Testis (tissue), 5 donors: ENCODE measurements at regions of chr4 and their contacts with region 1.

Region 1: DNA sequence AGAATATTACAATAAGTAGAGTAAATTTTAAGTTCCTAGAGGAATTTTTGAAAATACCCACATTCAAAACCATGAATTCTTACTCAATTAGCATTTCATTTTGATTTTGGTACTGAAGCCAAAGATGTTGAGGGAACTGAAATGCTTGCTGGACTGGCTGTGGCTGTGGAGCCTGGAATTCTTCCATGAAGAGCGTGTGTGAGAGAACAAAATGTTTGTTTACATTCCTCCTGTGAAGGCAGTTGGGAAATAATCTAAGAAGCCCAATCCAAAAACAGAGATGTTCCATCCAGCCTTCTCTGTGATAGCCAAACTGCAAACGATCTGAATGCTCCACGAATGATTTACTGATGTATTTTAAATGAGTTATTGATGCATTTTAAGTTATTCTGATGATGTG is 3.8 kb upstream of the ADH1B start:
- DNase-seq: peak; percentile 73
- H3K4me3 ChIP-seq: no peak overlapping the region
- H3K27ac ChIP-seq: peak overlapping the region; percentile 65 to 86
- H3K4me1 ChIP-seq: peaks cover 16% of the 10 kb centered on the region
- H3K27me3 ChIP-seq: no peaks in the 10 kb centered on the region
- CTCF ChIP-seq: no peak
- POLR2A ChIP-seq: no peak

Region 2: DNA sequence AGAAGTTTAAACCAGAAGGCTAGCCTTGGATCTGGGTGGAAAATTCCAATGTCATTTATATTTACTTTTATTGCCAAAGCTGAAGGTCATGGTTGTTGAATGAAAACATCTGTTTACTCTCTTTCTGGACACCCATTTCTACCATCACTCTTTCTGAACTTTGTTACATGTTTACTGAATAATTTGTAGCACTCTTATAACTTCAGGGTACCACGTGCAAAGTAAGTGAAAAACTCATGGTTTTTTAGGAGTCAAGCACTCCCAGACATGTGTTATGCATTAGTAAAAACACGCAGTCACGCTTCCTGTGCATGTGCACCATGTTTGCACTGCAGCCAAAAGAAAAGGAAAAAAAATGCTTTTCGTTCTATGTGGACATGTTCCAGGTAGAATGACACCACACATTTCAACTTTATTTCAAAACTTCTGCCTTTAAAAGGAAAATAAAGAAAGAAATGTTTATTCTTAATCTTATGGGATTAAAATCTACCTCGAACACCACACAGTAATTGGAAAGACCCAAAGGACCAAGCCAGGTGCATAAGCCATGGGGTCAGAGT is 58.9 kb after region 1 on chr4:
- intact Hi-C with region 1: loop called (anchors 10 kb)
- DNase-seq: peak; percentile 52
- H3K4me3 ChIP-seq: no peak overlapping the region
- H3K27ac ChIP-seq: peak overlapping the region; percentile 69 to 89
- H3K4me1 ChIP-seq: peaks cover 26% of the 10 kb centered on the region
- H3K27me3 ChIP-seq: no peaks in the 10 kb centered on the region
- CTCF ChIP-seq: no peak
- POLR2A ChIP-seq: no peak

Region 3: DNA sequence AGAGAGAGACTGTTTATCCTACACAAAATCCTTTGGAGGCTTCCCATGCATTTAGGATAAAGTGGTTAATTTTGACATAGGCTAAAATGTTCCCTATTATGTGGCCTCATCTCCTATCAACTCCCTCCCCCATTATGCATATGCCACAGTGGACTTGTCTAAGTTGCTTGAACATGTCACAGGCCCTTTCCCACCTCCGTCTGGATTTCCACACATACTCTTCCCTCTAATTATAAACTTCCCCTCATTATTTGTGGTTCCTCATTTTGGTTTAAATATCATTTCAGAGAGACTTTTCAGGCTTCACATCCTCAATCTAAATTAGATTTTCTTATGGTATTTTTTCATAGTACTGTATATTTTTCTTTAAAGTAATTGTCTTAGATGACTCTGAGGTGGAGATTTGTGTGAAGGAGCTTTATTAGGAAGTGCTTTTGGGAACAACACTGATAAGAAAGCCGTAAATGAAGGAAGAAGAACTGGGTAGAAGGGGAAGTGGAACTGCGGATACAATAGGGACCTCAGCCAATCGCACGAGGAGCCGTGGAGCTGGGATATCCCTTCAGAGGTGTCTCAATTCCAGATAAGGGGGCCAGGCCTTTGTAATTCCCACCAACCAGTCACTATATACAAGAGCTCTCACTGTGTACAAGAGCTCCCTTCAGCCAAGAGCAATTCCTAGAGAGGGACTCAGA is 193.8 kb after region 1 on chr4:
- intact Hi-C with region 1: no loop called
- DNase-seq: no peak
- H3K4me3 ChIP-seq: no peak overlapping the region
- H3K27ac ChIP-seq: no peak overlapping the region
- H3K4me1 ChIP-seq: no peaks in the 10 kb centered on the region
- H3K27me3 ChIP-seq: no peaks in the 10 kb centered on the region
- CTCF ChIP-seq: no peak
- POLR2A ChIP-seq: no peak

Region 4: GRCh38 chr4:101103381-101104142 is 1778.6 kb after region 1 on chr4:
- intact Hi-C with region 1: no loop called
- DNase-seq: no peak
- H3K4me3 ChIP-seq: no peak overlapping the region
- H3K27ac ChIP-seq: peak overlapping the region in 1 of 2 donors; percentile 4
- H3K4me1 ChIP-seq: peaks cover 31% of the 10 kb centered on the region
- H3K27me3 ChIP-seq: no peaks in the 10 kb centered on the region
- CTCF ChIP-seq: no peak
- POLR2A ChIP-seq: no peak